ENCODE measurements at regions of chr13 and their contacts with region 1.

Region 1: GRCh38 chr13:84896128-84896527 is 903.1 kb downstream of the SLITRK6 start:
- DNase-seq: peak; percentile 6
- H3K4me3 Mint-ChIP-seq: no peak overlapping the region
- H3K27ac Mint-ChIP-seq: no peak overlapping the region
- H3K4me1 Mint-ChIP-seq: no peaks in the 10 kb centered on the region
- H3K27me3 Mint-ChIP-seq: no peaks in the 10 kb centered on the region
- CTCF ChIP-seq: no peak

Region 2: GRCh38 chr13:84255226-84255797 is 640.8 kb before region 1 on chr13:
- CTCF ChIA-PET with region 1: no interaction called
- intact Hi-C with region 1: no loop called
- DNase-seq: no peak
- H3K4me3 Mint-ChIP-seq: no peak overlapping the region
- H3K27ac Mint-ChIP-seq: no peak overlapping the region
- H3K4me1 Mint-ChIP-seq: no peaks in the 10 kb centered on the region
- H3K27me3 Mint-ChIP-seq: no peaks in the 10 kb centered on the region
- CTCF ChIP-seq: no peak

Region 3: GRCh38 chr13:85031771-85032170 is 135.6 kb after region 1 on chr13:
- CTCF ChIA-PET with region 1: no interaction called
- intact Hi-C with region 1: no loop called
- DNase-seq: no peak
- H3K4me3 Mint-ChIP-seq: no peak overlapping the region
- H3K27ac Mint-ChIP-seq: no peak overlapping the region
- H3K4me1 Mint-ChIP-seq: no peaks in the 10 kb centered on the region
- H3K27me3 Mint-ChIP-seq: no peaks in the 10 kb centered on the region
- CTCF ChIP-seq: no peak

Region 4: GRCh38 chr13:85823832-85824231 is 927.7 kb after region 1 on chr13:
- CTCF ChIA-PET with region 1: no interaction called
- intact Hi-C with region 1: loop called (anchors 5 kb)
- DNase-seq: no peak
- H3K4me3 Mint-ChIP-seq: no peak overlapping the region
- H3K27ac Mint-ChIP-seq: no peak overlapping the region
- H3K4me1 Mint-ChIP-seq: no peaks in the 10 kb centered on the region
- H3K27me3 Mint-ChIP-seq: no peaks in the 10 kb centered on the region
- CTCF ChIP-seq: no peak